ENCODE measurements at regions of chr2 and their contacts with region 1.

Region 1: GRCh38 chr2:101899871-101900270 is 91.9 kb upstream of the IL1R2 start:
- DNase-seq: peak in 1 of 2 experiments; percentile 49
- H3K4me3 ChIP-seq: no peak overlapping the region
- H3K27ac ChIP-seq: no peak overlapping the region
- H3K4me1 ChIP-seq: peaks cover 12% of the 10 kb centered on the region
- H3K27me3 ChIP-seq: no peaks in the 10 kb centered on the region
- CTCF ChIP-seq: no peak

Region 2: DNA sequence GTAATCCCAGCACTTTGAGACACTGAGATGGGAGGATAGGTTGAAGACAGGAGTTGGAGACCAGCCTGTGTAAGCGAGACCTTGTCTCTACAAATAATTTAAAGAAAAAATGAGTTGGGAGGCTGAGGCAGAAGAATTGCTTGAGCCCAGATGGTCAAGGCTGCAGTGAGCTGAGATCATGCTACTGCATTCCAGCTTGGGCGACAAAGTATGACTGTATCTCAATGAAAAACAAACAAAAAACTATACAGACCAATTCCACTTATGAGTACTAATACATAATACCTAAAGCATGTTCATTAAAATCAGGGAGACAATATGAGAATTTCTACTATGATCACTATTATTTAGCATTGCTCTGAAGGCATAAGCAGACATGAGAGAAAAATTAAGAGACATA is 604.0 kb before region 1 on chr2:
- CTCF ChIA-PET with region 1: no interaction called
- POLR2A ChIA-PET with region 1: no interaction called
- intact Hi-C with region 1: no loop called
- DNase-seq: no peak
- H3K4me3 ChIP-seq: no peak overlapping the region
- H3K27ac ChIP-seq: 0 out of 2 replicates have a peak overlapping the region, but pooled peaks have one; percentile 13
- H3K4me1 ChIP-seq: 0 out of 2 replicates have a peak, but pooled peaks cover 15% of the 10 kb centered on the region
- H3K27me3 ChIP-seq: no peaks in the 10 kb centered on the region
- CTCF ChIP-seq: no peak

Region 3: DNA sequence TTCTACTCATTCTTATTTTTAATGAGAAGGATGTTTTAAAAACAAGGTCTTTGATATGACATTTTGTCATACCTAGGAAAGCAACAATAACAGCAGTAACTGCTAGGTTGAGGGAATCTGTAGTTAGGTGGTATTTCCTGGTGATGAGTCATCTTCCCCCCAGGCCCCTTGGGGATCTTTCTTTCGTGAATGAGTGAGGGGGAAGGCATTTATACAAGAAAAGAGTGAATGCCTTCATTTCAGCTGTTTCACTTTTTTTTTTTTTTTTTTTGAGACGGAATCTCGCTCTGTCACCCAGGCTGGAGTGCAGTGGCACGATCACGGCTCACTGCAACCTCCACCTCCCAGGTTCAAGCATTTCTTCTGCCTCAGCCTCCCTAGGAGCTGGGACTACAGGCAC is 93.7 kb before region 1 on chr2:
- CTCF ChIA-PET with region 1: no interaction called
- POLR2A ChIA-PET with region 1: no interaction called
- intact Hi-C with region 1: no loop called
- DNase-seq: peak; percentile 70 to 90
- H3K4me3 ChIP-seq: peak overlapping the region; percentile 11; the same call in 1 of the 2 replicates
- H3K27ac ChIP-seq: peak overlapping the region; percentile 80
- H3K4me1 ChIP-seq: peaks cover 68% of the 10 kb centered on the region
- H3K27me3 ChIP-seq: no peaks in the 10 kb centered on the region
- CTCF ChIP-seq: no peak

Region 4: GRCh38 chr2:101837354-101837753 is 62.5 kb before region 1 on chr2:
- CTCF ChIA-PET with region 1: interaction called, 16 read pairs
- POLR2A ChIA-PET with region 1: interaction called, 3 read pairs
- intact Hi-C with region 1: no loop called
- DNase-seq: no peak
- H3K4me3 ChIP-seq: no peak overlapping the region
- H3K27ac ChIP-seq: no peak overlapping the region
- H3K4me1 ChIP-seq: no peaks in the 10 kb centered on the region
- H3K27me3 ChIP-seq: no peaks in the 10 kb centered on the region
- CTCF ChIP-seq: no peak

Measured in PC-9 (cell line).